ENCODE measurements at regions of chr4 and their contacts with region 1.

Region 1: DNA sequence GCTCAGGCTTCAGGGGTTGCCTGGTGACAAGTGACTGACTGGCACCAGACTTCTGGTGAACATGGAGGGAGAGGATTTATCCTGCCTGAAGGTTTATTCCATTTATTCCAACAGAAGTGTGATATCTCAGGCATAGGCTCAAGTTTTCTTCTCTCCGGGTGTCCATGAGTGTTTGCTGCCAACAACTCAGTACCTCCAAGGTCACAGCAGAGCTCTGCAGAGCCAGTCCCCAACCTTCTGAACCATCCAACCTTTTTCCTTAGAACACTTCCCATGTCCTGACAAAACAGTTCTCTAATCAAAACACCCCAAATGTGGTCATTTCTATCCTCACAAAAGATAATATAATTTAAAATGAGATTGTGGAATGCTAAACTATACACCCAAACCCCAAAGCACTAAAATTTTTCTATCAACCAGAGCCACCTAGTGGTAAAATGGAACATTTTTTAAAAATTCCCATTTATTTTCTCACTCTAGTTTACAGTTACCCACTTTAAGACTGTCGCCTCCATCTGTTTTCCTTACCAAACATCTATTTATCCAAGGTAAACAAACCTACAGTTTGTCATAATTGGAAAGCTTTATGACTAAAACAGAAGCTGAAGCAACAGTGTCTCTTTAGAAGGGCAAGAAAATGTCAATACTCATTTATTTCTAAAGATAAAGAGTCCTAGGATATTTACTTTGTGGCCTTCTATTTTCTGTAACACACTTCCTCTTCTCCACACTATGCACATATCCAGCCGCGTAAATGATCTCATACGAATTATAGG is 39.6 kb downstream of the TMEM154 start:
- DNase-seq: no peak
- ATAC-seq: no peak
- H3K4me3 Mint-ChIP-seq: no peak overlapping the region
- H3K27ac Mint-ChIP-seq: peak overlapping the region; percentile 63
- H3K4me1 Mint-ChIP-seq: peaks cover 69% of the 10 kb centered on the region
- H3K27me3 Mint-ChIP-seq: no peaks in the 10 kb centered on the region
- CTCF ChIP-seq: peak; percentile 85

Region 2: DNA sequence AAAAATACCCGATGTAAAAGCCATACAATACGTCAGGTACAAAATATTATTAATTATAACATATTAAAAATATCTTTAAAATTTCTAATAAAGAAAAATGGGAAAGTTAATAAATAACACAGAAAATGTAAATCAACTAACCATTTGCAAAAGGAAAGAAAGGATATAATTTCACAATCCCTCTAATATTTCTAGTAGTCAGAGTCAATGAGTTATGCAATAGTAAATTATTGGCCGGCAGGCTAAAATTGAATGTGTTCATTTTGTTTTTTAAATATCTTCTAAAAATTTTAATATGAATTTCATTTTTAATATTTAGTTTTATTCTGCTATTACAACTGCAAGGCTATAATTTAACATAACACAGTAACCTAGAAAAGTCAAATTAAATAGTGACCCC is 260.1 kb before region 1 on chr4:
- CTCF ChIA-PET with region 1: no interaction called
- POLR2A ChIA-PET with region 1: interaction called, 10 read pairs
- intact Hi-C with region 1: no loop called
- DNase-seq: no peak
- ATAC-seq: no peak
- H3K4me3 Mint-ChIP-seq: no peak overlapping the region
- H3K27ac Mint-ChIP-seq: no peak overlapping the region
- H3K4me1 Mint-ChIP-seq: peaks cover 14% of the 10 kb centered on the region
- H3K27me3 Mint-ChIP-seq: no peaks in the 10 kb centered on the region
- CTCF ChIP-seq: no peak

Region 3: DNA sequence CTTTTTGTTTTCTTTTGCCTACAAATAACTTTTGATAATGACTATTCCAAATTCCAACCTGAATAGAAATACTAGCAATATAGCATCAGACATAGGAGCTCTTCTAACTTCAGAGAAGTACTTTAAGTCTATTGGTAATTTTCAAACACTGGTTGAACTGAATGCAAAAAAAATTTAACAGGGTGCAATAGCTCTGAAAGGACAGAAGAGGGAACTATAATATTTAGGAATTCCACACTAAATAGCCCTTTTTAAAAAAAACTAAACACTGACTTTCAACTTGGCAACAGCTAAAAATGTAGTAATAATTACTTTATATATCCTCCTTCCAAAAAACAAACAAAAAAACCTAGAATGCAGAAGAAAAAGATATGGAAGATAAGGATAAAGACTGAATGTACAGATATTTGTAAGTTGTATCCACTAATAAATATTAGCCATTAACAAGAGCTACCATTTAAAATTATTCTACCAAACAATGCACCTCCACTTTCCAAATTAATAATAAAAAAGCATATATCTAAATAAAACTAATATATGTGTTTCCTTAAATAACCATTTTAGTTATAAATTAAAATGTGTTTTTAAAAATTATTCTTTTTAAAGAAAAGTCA is 185.7 kb before region 1 on chr4:
- CTCF ChIA-PET with region 1: interaction called, 82 read pairs
- POLR2A ChIA-PET with region 1: interaction called, 5 read pairs
- intact Hi-C with region 1: loop called (anchors 1 kb)
- DNase-seq: no peak
- ATAC-seq: no peak
- H3K4me3 Mint-ChIP-seq: no peak overlapping the region
- H3K27ac Mint-ChIP-seq: peak overlapping the region; percentile 41
- H3K4me1 Mint-ChIP-seq: peaks cover 50% of the 10 kb centered on the region
- H3K27me3 Mint-ChIP-seq: no peaks in the 10 kb centered on the region
- CTCF ChIP-seq: no peak

Region 4: DNA sequence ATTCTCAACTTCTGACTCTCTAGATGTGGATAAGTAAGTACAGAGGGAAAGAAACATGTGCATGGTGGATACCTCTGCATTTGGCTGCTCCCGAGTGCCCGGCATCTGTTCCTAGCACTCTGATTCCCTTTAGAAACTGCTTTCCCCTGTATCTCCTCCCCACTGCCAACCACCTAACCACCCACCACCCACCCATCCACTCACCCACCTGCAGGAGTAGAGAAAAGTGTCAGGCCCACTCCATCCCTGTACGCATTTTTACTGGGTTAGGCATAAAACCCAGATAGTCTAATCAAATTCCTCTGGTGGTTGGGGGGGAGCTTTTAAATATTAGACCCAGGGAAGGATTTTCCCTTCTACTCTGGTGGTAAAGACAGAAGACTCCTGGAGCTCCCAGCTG is 23.4 kb before region 1 on chr4:
- CTCF ChIA-PET with region 1: no interaction called
- POLR2A ChIA-PET with region 1: no interaction called
- intact Hi-C with region 1: no loop called
- DNase-seq: no peak
- ATAC-seq: no peak
- H3K4me3 Mint-ChIP-seq: no peak overlapping the region
- H3K27ac Mint-ChIP-seq: no peak overlapping the region
- H3K4me1 Mint-ChIP-seq: peaks cover 4% of the 10 kb centered on the region
- H3K27me3 Mint-ChIP-seq: no peaks in the 10 kb centered on the region
- CTCF ChIP-seq: no peak

Region 5: GRCh38 chr4:152655272-152656129 is 15.3 kb after region 1 on chr4:
- CTCF ChIA-PET with region 1: interaction called, 5 read pairs
- POLR2A ChIA-PET with region 1: interaction called, 56 read pairs
- intact Hi-C with region 1: no loop called
- DNase-seq: no peak
- ATAC-seq: no peak
- H3K4me3 Mint-ChIP-seq: peak overlapping the region; percentile 3
- H3K27ac Mint-ChIP-seq: peak overlapping the region; percentile 59
- H3K4me1 Mint-ChIP-seq: peaks cover 47% of the 10 kb centered on the region
- H3K27me3 Mint-ChIP-seq: no peaks in the 10 kb centered on the region
- CTCF ChIP-seq: no peak

Region 6: DNA sequence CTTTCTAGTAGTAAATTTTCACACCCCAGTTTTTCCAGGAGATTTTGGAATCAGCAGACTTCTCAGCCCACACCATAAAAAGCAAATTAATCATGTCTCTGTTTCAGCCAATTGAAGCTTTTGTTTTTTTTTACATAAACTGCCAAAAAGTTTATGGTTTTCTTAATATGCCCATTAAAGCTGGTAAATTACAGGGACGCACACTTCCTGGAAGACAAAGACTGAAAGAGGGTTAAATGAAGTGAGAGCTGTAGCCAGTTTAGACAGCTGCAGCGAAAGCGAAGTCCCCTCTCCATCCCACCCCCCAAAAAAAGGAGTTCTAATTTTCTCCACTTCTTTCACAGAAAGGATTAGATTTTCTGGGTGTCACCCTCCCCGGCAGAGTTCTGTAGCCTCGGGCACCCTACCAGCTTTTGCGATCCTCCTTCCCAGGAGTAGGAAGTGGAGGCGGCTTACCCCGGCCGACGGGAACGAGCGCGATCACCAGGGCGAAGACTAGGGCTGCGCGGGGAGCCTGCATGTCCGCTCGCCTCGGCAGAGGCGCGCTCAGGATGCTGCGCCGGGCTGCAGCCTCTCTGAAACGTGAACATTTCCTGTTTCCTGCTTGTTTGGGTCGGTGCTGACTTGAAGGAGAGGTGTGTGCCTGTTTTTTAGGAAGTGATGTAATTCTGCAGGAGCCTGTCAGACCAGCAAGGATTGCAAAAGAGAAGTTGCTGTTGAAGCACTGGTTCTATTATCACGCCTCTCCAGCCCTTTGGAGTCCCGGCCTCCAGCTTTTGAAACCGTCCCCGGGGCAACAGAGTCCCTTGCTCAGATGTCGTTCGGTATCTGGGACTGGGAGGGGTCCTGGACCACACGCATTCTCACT is 39.4 kb after region 1 on chr4 and contains the start of gene TMEM154:
- CTCF ChIA-PET with region 1: interaction called, 8 read pairs
- POLR2A ChIA-PET with region 1: interaction called, 41 read pairs
- intact Hi-C with region 1: loop called (anchors 1 kb)
- DNase-seq: peak; percentile 66
- ATAC-seq: peak; percentile 83
- H3K4me3 Mint-ChIP-seq: peak within 1 kb of the TSS; percentile 95
- H3K27ac Mint-ChIP-seq: peak within 1 kb of the TSS; percentile 96
- H3K4me1 Mint-ChIP-seq: peaks cover 84% of the 10 kb centered on the region
- H3K27me3 Mint-ChIP-seq: no peaks in the 10 kb centered on the region
- CTCF ChIP-seq: no peak
- total RNA-seq, gene TMEM154: 47.5 and 59.9 TPM in 2 replicates

Region 7: DNA sequence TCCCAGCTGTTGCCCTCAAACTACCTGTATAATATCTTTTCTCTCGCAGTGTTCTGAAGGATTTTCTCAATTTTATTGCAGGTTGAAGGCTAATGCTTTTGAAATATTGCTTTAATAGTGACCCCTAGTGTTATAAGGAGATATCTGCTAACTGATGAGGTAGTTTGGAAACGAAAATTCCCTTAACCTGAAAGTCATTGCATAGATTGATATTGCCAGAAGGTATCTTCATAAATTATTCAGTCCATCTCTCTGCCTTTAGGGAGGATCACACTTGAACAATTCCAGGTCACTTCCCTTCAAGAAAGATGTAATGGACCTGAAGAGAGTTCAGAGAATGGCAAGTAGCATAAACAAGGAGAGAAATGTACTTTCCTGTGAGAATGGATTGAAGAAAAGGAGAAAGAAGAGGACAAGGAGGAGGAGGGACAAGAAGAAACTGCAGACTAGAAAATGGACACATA is 95.2 kb after region 1 on chr4:
- CTCF ChIA-PET with region 1: interaction called, 45 read pairs
- POLR2A ChIA-PET with region 1: interaction called, 4 read pairs
- intact Hi-C with region 1: loop called (anchors 1 kb)
- DNase-seq: no peak
- ATAC-seq: no peak
- H3K4me3 Mint-ChIP-seq: no peak overlapping the region
- H3K27ac Mint-ChIP-seq: no peak overlapping the region
- H3K4me1 Mint-ChIP-seq: peaks cover 14% of the 10 kb centered on the region
- H3K27me3 Mint-ChIP-seq: peaks cover 2% of the 10 kb centered on the region
- CTCF ChIP-seq: peak; percentile 24